ENCODE measurements at regions of chr7 and their contacts with region 1.

Region 1: GRCh38 chr7:87312215-87312865 is 33.1 kb upstream of the CROT start:
- DNase-seq: peak in 4 of 5 donors; percentile 51 to 72 (median 56)
- H3K4me3 ChIP-seq: no peak overlapping the region
- H3K27ac ChIP-seq: no peak overlapping the region
- H3K4me1 ChIP-seq: no peaks in the 10 kb centered on the region
- H3K27me3 ChIP-seq: no peaks in the 10 kb centered on the region
- CTCF ChIP-seq: peak; percentile 99

Region 2: DNA sequence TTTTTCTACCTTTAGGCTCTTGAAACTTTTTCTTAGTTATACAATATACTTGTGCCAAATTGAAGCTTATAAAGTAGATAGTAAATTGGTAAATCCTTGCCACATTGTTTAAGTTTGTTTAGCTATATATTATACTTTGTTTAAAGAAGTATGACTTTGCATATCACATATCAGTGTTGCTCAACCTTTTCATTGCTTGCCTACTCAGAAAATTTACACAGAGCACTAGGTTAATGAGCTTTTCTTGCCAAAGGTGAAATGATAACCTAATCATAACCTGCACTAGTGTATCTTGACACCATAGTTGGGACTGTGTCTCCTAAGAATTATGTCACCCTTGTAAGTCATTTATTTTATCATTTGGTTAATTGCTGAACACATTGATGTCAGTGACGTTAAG is 63.7 kb after region 1 on chr7:
- intact Hi-C with region 1: no loop called
- DNase-seq: no peak
- H3K4me3 ChIP-seq: no peak overlapping the region
- H3K27ac ChIP-seq: no peak overlapping the region
- H3K4me1 ChIP-seq: no peaks in the 10 kb centered on the region
- H3K27me3 ChIP-seq: no peaks in the 10 kb centered on the region
- CTCF ChIP-seq: no peak

Region 3: GRCh38 chr7:87416682-87417587 is 104.6 kb after region 1 on chr7:
- intact Hi-C with region 1: loop called (anchors 5 kb)
- DNase-seq: peak in 4 of 5 donors; percentile 43 to 77 (median 70)
- H3K4me3 ChIP-seq: no peak overlapping the region
- H3K27ac ChIP-seq: no peak overlapping the region
- H3K4me1 ChIP-seq: no peaks in the 10 kb centered on the region
- H3K27me3 ChIP-seq: no peaks in the 10 kb centered on the region
- CTCF ChIP-seq: peak; percentile 74